Cardiac septum (tissue), 1 donor: ENCODE measurements at regions of chr2 and their contacts with region 1.

Region 1: GRCh38 chr2:9205963-9206948 is at the start of gene ASAP2:
- DNase-seq: peak; percentile 87
- total RNA-seq, gene ASAP2: 11.8 TPM

Region 2: DNA sequence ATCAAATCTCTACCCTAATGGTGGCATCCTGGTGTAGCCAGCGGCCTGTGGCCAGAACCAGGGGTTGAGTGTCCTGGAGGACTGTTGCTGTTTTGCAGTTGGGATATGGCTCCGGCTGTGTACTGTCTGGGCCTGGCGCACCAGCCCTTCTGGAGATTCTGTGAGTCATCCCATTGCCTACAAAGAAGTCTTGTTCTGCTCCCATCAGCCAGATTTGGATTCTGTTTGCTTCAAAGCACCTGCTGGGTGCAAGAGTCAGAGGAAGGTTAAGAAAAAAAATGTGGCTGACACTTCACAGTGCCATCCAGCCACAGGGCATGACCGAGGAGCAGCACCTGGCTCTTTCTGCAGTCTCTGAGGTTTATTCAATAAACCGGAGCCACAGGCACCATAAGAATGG is 40.6 kb before region 1 on chr2:
- intact Hi-C with region 1: no loop called
- DNase-seq: no peak

Region 3: DNA sequence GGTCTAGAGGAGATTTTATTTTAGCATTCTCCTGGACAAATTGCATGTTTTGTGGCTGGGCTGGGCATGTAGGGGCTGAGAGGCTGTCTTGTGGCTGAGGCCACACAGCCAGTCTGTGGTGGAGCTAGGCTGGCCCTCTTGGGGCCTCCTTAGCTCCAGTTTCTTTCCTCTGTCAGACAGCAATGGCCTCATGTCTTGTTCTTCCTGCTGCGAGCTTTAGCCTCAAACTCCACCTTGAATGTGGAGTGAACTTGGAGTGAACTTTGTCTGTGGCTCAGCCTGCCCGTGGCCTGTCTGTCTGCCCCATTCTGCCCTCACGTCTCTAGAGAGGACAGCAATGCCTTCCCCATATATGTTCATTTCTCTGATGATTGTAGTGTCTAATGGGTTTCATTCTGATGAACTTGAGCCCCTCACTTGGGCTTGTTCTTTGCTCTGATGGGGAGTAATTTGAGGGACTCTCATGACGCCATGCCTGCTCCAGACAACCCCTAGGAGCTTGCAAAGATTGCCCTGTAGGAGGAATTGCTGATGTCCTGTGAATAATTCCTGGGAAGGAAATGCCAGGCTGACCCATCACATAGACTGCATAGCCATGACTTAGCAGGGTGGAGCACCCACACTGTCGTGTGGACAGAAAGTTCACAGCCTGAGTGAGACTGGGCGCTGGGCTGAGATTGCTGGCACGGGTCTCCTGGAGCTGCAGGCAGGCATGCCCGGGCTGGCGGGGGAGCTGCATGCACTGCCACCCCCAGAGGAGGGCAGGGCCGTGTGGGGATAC is 43.0 kb after region 1 on chr2:
- intact Hi-C with region 1: no loop called
- DNase-seq: no peak

Region 4: GRCh38 chr2:9333591-9334171 is 127.4 kb after region 1 on chr2:
- intact Hi-C with region 1: loop called (anchors 5 kb)
- DNase-seq: no peak

Region 5: GRCh38 chr2:9423100-9423921 is 217.1 kb after region 1 on chr2 and contains the starts of genes CPSF3 and ITGB1BP1:
- intact Hi-C with region 1: loop called (anchors 5 kb)
- DNase-seq: peak; percentile 97
- total RNA-seq, gene CPSF3: 17.1 TPM
- total RNA-seq, gene ITGB1BP1: 160 TPM